ENCODE measurements at regions of chr17 and their contacts with region 1.

Region 1: DNA sequence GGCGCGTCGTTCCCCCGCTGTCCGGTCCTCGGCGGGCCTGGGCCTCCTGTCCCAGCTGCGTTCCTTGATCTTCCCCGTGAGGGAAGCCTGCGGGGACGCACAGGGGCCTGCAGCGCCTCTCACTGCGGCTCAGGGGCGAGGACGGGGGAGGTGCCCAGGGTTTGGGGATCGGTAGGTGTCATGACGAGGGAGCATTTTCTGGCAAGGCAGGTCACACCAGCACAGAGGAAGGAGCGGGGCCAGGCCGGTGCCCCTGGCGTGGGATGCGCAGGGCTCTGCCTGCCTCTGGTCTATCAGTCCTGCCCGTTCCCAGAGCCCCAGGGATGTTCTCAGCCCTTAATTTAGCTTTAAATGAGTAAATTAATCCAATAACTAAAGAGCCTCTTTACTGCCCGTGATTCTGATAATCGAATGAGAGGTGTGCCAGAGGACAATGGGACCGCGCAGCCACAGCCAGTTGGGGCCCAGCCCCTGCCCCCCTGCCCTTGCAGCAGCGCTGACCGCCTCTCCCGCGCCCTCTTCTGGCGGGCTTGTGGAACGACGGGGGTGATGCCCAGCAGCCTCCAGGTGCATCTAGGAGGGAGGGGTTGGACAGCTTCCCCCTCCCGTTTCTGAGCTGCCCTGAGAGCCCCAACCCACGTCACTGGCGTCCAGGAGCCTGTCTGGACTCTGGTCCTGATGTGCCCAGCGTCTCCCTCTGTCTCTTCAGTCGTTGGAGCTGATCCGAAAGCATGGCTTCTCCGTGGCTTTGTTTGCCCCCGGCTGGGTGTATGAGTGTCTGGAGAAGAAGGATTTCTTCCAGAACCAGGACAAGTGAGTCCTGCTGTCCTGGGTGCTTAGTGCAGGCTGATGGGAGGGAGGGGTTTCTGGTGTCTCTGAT is 7.9 kb downstream of the ENGASE start:
- DNase-seq: peak; percentile 60 to 80
- H3K4me3 ChIP-seq: no peak overlapping the region
- H3K4me3 Mint-ChIP-seq: no peak overlapping the region
- H3K27ac Mint-ChIP-seq: no peak overlapping the region
- H3K4me1 ChIP-seq: no peaks in the 10 kb centered on the region
- H3K4me1 Mint-ChIP-seq: no peaks in the 10 kb centered on the region
- H3K27me3 ChIP-seq: no peaks in the 10 kb centered on the region
- H3K27me3 Mint-ChIP-seq: no peaks in the 10 kb centered on the region
- CTCF ChIP-seq: peak; percentile 89 to 95

Region 2: DNA sequence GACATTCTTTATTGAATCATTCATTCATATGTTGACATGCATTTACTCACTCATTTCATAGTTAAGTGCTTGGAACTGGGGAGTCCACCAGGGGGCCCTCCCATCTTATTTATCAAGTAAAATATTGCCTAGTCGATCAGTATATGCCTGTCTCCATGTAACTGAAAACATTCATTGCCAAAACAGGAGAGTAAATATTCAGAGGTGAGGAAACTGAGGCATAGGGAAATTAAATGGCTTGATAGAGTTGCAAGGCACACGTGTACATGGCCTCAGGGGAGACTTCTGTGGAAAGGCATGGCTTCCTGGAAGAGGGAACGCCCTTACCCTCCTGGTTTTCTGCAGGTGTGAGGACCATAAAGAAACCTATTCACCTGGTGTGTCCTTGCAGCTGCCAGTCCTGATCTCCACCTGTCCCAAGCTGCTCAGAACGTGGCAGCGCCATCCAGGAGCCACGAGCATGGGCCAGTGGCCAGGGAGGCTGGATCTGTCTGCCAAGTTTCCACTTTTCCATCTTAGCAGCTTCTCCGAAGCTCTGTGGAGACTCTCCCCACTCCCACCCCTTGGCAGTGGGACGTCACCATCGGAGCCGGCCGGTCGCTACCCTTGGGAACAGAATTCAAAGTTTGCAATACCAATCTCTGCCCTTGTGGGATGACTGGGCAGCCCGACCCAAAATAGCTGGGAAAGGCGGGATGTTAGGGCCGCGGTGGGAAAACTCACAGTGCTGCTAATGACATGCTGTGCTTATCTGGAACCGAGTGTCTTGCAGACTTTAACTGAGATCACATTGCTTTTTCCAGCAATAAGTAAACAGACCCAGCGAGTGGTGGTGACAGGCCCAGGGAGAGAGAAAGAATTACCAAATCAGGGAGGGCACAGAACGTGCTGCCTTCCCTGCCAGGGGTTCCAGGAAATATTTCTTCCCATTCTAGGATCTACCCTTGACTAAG is 62.6 kb before region 1 on chr17:
- CTCF ChIA-PET with region 1: interaction called, 4 read pairs
- POLR2A ChIA-PET with region 1: no interaction called
- intact Hi-C with region 1: loop called (anchors 1 kb)
- DNase-seq: peak; percentile 78
- H3K4me3 ChIP-seq: no peak overlapping the region
- H3K4me3 Mint-ChIP-seq: no peak overlapping the region
- H3K27ac Mint-ChIP-seq: peak overlapping the region; percentile 77
- H3K4me1 ChIP-seq: peaks cover 49% of the 10 kb centered on the region
- H3K4me1 Mint-ChIP-seq: peaks cover 56% of the 10 kb centered on the region
- H3K27me3 ChIP-seq: no peaks in the 10 kb centered on the region
- H3K27me3 Mint-ChIP-seq: no peaks in the 10 kb centered on the region
- CTCF ChIP-seq: peak; percentile 72 to 73

Region 3: GRCh38 chr17:79065105-79065670 is 17.4 kb before region 1 on chr17:
- CTCF ChIA-PET with region 1: interaction called, 4 read pairs
- POLR2A ChIA-PET with region 1: no interaction called
- intact Hi-C with region 1: loop called (anchors 1 kb)
- DNase-seq: peak in 1 of 2 experiments; percentile 59
- H3K4me3 ChIP-seq: no peak overlapping the region
- H3K4me3 Mint-ChIP-seq: no peak overlapping the region
- H3K27ac Mint-ChIP-seq: no peak overlapping the region
- H3K4me1 ChIP-seq: no peaks in the 10 kb centered on the region
- H3K4me1 Mint-ChIP-seq: peaks cover 2% of the 10 kb centered on the region
- H3K27me3 ChIP-seq: no peaks in the 10 kb centered on the region
- H3K27me3 Mint-ChIP-seq: no peaks in the 10 kb centered on the region
- CTCF ChIP-seq: peak; percentile 60 to 64

Region 4: DNA sequence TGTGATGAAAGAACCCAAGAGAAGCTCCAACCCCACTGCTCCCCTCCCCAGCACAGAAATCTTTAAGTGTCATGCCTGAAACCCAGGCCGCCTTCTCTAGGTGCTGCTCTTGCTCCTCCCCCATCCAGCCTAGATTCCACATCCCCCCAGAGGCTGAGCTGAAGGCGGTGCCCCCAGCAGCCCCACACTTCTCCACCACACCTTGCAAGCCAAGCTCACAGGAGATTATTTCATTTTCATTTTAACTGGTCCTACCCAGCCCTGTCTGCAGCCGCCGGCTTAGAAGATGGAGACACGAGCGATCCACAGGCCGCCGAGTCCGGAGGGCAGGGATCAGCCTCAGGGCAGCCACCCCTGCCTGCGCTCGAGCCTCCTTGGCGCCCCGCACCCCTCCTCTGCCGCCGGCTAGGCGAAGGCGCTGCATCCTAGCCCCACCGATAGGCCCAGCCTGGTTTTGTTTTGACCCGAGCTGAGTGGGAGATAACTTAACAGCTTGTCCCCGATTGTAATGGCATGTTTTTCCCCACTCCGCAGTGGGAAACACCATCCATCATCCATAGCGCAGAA is 403.0 kb after region 1 on chr17:
- CTCF ChIA-PET with region 1: no interaction called
- POLR2A ChIA-PET with region 1: no interaction called
- intact Hi-C with region 1: no loop called
- DNase-seq: no peak
- H3K4me3 ChIP-seq: no peak overlapping the region
- H3K4me3 Mint-ChIP-seq: no peak overlapping the region
- H3K27ac Mint-ChIP-seq: no peak overlapping the region
- H3K4me1 ChIP-seq: peaks cover 6% of the 10 kb centered on the region
- H3K4me1 Mint-ChIP-seq: peaks cover 7% of the 10 kb centered on the region
- H3K27me3 ChIP-seq: no peaks in the 10 kb centered on the region; the same call in 1 of the 2 replicates
- H3K27me3 Mint-ChIP-seq: peaks cover 14% of the 10 kb centered on the region
- CTCF ChIP-seq: no peak